CD8-positive, alpha-beta T cell (primary cell): ENCODE measurements at regions of chr2 and their contacts with region 1.

Region 1: GRCh38 chr2:180006781-180007579 is at the start of gene CWC22:
- DNase-seq: peak; percentile 74 to 96 (median 86)
- ATAC-seq: peak; percentile 93
- H3K4me3 ChIP-seq: peak within 1 kb of the TSS; percentile 72 to 88
- H3K4me3 Mint-ChIP-seq: peak within 1 kb of the TSS; percentile 93
- H3K27ac ChIP-seq: peak within 1 kb of the TSS; percentile 98 to 99
- H3K27ac Mint-ChIP-seq: peak within 1 kb of the TSS; percentile 99
- H3K4me1 ChIP-seq: peaks cover 14% of the 10 kb centered on the region
- H3K4me1 Mint-ChIP-seq: peaks cover 38% of the 10 kb centered on the region
- H3K27me3 ChIP-seq: no peaks in the 10 kb centered on the region
- H3K27me3 Mint-ChIP-seq: no peaks in the 10 kb centered on the region
- CTCF ChIP-seq: no peak
- total RNA-seq, gene CWC22: 13.8 to 15.3 TPM

Region 2: GRCh38 chr2:178478439-178479274 is 1528.3 kb before region 1 on chr2 and contains the start of gene FKBP7:
- CTCF ChIA-PET with region 1: no interaction called
- POLR2A ChIA-PET with region 1: no interaction called
- intact Hi-C with region 1: loop called (anchors 10 kb)
- DNase-seq: peak; percentile 79 to 95 (median 86)
- ATAC-seq: peak; percentile 82
- H3K4me3 ChIP-seq: peak within 1 kb of the TSS; percentile 84 to 88
- H3K4me3 Mint-ChIP-seq: peak within 1 kb of the TSS; percentile 98
- H3K27ac ChIP-seq: peak within 1 kb of the TSS; percentile 92 to 93
- H3K27ac Mint-ChIP-seq: peak within 1 kb of the TSS; percentile 99
- H3K4me1 ChIP-seq: peaks cover 39% of the 10 kb centered on the region
- H3K4me1 Mint-ChIP-seq: peaks cover 51% of the 10 kb centered on the region
- H3K27me3 ChIP-seq: no peaks in the 10 kb centered on the region
- H3K27me3 Mint-ChIP-seq: no peaks in the 10 kb centered on the region
- CTCF ChIP-seq: peak; percentile 87
- total RNA-seq, gene FKBP7: 0.69 to 0.79 TPM

Region 3: DNA sequence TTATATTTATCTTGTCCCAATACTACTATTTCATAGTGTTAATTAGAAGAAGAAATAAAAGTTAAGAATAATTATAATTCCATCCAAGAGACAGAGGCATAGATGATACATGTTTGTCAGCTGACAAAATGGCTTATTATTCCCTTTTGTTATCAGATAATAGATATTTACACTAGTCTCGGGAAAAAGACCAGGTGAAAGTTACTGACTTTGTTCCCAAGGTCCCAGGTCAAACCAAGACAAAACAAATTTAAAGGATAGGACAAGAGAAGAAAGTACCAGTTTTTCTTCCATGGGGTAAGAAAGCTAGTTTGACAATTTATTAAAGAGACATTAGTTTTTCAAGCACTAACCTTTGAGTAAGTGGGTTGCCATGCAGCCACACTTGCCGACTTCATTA is 1273.0 kb before region 1 on chr2:
- CTCF ChIA-PET with region 1: no interaction called
- POLR2A ChIA-PET with region 1: no interaction called
- intact Hi-C with region 1: no loop called
- DNase-seq: no peak
- ATAC-seq: no peak
- H3K4me3 ChIP-seq: no peak overlapping the region
- H3K4me3 Mint-ChIP-seq: no peak overlapping the region
- H3K27ac ChIP-seq: no peak overlapping the region
- H3K27ac Mint-ChIP-seq: no peak overlapping the region
- H3K4me1 ChIP-seq: no peaks in the 10 kb centered on the region
- H3K4me1 Mint-ChIP-seq: no peaks in the 10 kb centered on the region
- H3K27me3 ChIP-seq: no peaks in the 10 kb centered on the region
- H3K27me3 Mint-ChIP-seq: no peaks in the 10 kb centered on the region
- CTCF ChIP-seq: no peak

Region 4: GRCh38 chr2:179995741-179996515 is 11.1 kb before region 1 on chr2:
- CTCF ChIA-PET with region 1: no interaction called
- POLR2A ChIA-PET with region 1: no interaction called
- intact Hi-C with region 1: no loop called
- DNase-seq: no peak
- ATAC-seq: no peak
- H3K4me3 ChIP-seq: no peak overlapping the region
- H3K4me3 Mint-ChIP-seq: no peak overlapping the region
- H3K27ac ChIP-seq: no peak overlapping the region
- H3K27ac Mint-ChIP-seq: peak overlapping the region; percentile 65
- H3K4me1 ChIP-seq: peaks cover 7% of the 10 kb centered on the region
- H3K4me1 Mint-ChIP-seq: peaks cover 77% of the 10 kb centered on the region
- H3K27me3 ChIP-seq: no peaks in the 10 kb centered on the region
- H3K27me3 Mint-ChIP-seq: no peaks in the 10 kb centered on the region
- CTCF ChIP-seq: no peak

Region 5: DNA sequence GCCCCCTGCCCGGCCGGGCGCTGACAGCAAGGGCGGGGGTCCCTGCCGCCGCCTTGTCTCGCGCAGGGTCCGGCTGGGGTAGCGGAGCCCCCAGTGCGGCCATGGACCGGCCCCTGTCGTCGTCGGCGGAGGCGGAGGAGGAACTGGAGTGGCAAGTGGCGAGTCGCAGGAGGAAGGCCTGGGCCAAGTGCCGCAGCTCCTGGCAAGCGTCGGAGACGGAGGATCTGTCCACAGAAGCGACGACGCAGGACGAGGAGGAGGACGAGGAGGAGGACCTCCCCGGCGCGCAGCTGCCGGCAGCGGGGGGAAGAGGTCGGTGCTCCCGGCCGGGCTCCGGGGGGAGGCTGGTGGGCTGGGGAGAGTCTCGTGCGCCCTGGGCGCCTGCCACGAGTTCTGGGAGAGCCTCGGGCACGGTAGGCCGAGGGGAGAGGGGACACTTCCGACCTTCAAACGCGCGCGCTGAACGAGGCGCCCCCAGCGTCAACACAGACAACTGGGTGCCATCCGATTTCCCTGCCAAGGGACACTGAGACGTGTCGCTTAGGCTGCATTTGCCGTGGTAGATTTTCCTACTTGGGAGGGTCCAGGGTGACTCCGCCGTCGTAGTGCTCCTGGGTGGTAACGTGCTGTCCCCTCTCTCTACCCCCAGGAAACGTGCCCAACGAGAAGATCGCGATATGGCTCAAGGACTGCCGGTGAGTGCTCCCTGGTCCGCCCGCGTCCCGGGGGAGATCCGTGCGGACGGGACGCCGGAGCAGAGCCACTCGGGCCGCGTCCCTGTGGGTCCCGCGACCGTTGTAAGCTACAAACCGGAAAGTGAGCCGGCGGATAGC is 1885.2 kb after region 1 on chr2:
- CTCF ChIA-PET with region 1: no interaction called
- POLR2A ChIA-PET with region 1: no interaction called
- intact Hi-C with region 1: loop called (anchors 5 to 10 kb)
- DNase-seq: peak; percentile 26 to 77 (median 61)
- ATAC-seq: peak; percentile 63
- H3K4me3 ChIP-seq: peak overlapping the region; percentile 80 to 85
- H3K4me3 Mint-ChIP-seq: peak overlapping the region; percentile 92
- H3K27ac ChIP-seq: peak overlapping the region; percentile 53 to 55
- H3K27ac Mint-ChIP-seq: peak overlapping the region; percentile 86
- H3K4me1 ChIP-seq: peaks cover 19% of the 10 kb centered on the region
- H3K4me1 Mint-ChIP-seq: peaks cover 39% of the 10 kb centered on the region
- H3K27me3 ChIP-seq: peaks cover 0 to 3% of the 10 kb centered on the region in 2 experiments
- H3K27me3 Mint-ChIP-seq: peaks cover 12% of the 10 kb centered on the region
- CTCF ChIP-seq: peak; percentile 14